Naive thymus-derived CD8-positive, alpha-beta T cell (primary cell): ENCODE measurements at regions of chr11 and their contacts with region 1.

Region 1: DNA sequence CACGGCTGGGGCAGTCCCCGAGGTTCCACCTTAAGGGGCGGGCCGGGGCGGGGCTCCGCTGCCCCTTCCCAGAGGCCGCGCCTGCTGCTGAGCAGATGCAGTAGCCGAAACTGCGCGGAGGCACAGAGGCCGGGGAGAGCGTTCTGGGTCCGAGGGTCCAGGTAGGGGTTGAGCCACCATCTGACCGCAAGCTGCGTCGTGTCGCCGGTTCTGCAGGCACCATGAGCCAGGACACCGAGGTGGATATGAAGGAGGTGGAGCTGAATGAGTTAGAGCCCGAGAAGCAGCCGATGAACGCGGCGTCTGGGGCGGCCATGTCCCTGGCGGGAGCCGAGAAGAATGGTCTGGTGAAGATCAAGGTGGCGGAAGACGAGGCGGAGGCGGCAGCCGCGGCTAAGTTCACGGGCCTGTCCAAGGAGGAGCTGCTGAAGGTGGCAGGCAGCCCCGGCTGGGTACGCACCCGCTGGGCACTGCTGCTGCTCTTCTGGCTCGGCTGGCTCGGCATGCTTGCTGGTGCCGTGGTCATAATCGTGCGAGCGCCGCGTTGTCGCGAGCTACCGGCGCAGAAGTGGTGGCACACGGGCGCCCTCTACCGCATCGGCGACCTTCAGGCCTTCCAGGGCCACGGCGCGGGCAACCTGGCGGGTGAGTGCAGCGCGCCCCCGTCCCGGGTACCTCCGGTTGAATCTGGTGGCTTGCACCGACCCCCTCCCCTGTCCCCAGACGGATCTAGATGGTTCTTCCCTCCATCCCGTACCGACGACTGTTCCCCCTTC is at the start of gene SLC3A2:
- DNase-seq: peak; percentile 77 to 90 (median 84)
- ATAC-seq: peak; percentile 81 to 82
- H3K4me3 Mint-ChIP-seq: peak within 1 kb of the TSS; percentile 96 to 100 (median 99)
- H3K27ac Mint-ChIP-seq: peak within 1 kb of the TSS; percentile 97 to 100 (median 100)
- H3K4me1 Mint-ChIP-seq: peaks cover 33 to 53% (median 51%) of the 10 kb centered on the region in 4 donors
- H3K27me3 Mint-ChIP-seq: no peaks in the 10 kb centered on the region
- polyA plus RNA-seq, gene SLC3A2: 119 to 164 (median 125) TPM

Region 2: GRCh38 chr11:62400760-62401159 is 480.2 kb before region 1 on chr11:
- POLR2A ChIA-PET with region 1: interaction called, 12 read pairs
- DNase-seq: no peak
- ATAC-seq: no peak
- H3K4me3 Mint-ChIP-seq: peak overlapping the region in 9 of 10 donors; percentile 19 to 96 (median 83)
- H3K27ac Mint-ChIP-seq: peak overlapping the region in 9 of 10 donors; percentile 59 to 98 (median 91)
- H3K4me1 Mint-ChIP-seq: peaks cover 35 to 67% (median 59%) of the 10 kb centered on the region in 4 donors
- H3K27me3 Mint-ChIP-seq: no peaks in the 10 kb centered on the region

Region 3: GRCh38 chr11:62753736-62754603 is 127.0 kb before region 1 on chr11 and contains the start of gene ZBTB3:
- POLR2A ChIA-PET with region 1: interaction called, 23 read pairs
- DNase-seq: peak; percentile 93 to 100 (median 96)
- ATAC-seq: peak; percentile 95 to 96
- H3K4me3 Mint-ChIP-seq: peak within 1 kb of the TSS; percentile 91 to 100 (median 97)
- H3K27ac Mint-ChIP-seq: peak within 1 kb of the TSS; percentile 88 to 100 (median 99)
- H3K4me1 Mint-ChIP-seq: peaks cover 8 to 43% (median 28%) of the 10 kb centered on the region in 4 donors
- H3K27me3 Mint-ChIP-seq: no peaks in the 10 kb centered on the region
- polyA plus RNA-seq, gene ZBTB3: 2.1 to 6.7 (median 3.6) TPM

Region 4: GRCh38 chr11:62787005-62787759 is 93.8 kb before region 1 on chr11 and contains the start of gene TMEM179B:
- POLR2A ChIA-PET with region 1: interaction called, 87 read pairs
- DNase-seq: peak; percentile 90 to 99 (median 97)
- ATAC-seq: peak; percentile 69 to 73
- H3K4me3 Mint-ChIP-seq: peak within 1 kb of the TSS; percentile 90 to 96 (median 96)
- H3K27ac Mint-ChIP-seq: peak within 1 kb of the TSS; percentile 92 to 98 (median 96)
- H3K4me1 Mint-ChIP-seq: peaks cover 14 to 53% (median 46%) of the 10 kb centered on the region in 4 donors
- H3K27me3 Mint-ChIP-seq: no peaks in the 10 kb centered on the region
- polyA plus RNA-seq, gene TMEM179B: 109 to 126 (median 122) TPM

Region 5: DNA sequence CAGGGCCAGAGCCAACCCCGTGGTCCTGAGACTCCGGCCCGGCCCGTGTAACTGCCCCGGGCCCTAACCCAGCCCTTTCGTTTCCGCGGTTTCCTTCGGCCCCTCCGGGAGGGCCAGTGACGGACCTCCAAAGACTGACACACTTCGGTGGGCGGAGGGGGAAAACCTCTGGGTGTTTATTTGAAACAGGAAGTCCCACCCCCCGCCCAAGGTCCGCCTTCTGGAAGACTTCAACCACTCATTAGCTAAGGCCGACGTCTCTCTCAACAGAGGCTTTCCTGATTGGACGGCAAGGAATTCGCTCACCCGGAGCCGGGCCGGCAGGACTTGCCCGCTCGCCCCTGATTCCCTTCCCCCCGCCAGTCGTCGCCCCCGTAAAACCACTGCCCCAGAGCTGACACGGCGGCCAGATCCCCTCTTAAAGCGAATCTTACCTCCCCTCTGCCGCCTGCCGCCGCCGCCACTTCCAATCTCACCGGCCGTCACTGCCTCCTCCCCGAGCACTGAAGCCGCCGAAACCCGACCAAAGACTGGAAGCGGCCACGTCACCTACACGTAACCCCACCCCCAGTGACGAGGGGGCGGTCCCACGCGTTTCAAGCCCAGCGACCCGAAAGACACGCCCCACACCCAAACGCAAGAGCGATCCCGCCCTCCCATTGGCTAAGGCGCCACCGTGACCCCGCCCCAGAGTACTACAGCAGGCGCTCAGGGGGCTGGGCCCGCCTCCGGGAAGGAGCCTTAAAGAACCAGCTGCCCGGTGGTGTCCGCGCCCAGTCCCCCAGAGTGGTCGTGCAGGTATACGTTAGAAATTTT is 49.3 kb before region 1 on chr11 and contains the start of gene STX5:
- POLR2A ChIA-PET with region 1: interaction called, 18 read pairs
- DNase-seq: peak; percentile 99 to 100 (median 100)
- ATAC-seq: peak; percentile 89 to 90
- H3K4me3 Mint-ChIP-seq: peak within 1 kb of the TSS; percentile 93 to 99 (median 98)
- H3K27ac Mint-ChIP-seq: peak within 1 kb of the TSS; percentile 91 to 100 (median 100)
- H3K4me1 Mint-ChIP-seq: peaks cover 25 to 56% (median 48%) of the 10 kb centered on the region in 4 donors
- H3K27me3 Mint-ChIP-seq: no peaks in the 10 kb centered on the region
- polyA plus RNA-seq, gene STX5: 25.4 to 30.4 (median 26.2) TPM

Region 6: DNA sequence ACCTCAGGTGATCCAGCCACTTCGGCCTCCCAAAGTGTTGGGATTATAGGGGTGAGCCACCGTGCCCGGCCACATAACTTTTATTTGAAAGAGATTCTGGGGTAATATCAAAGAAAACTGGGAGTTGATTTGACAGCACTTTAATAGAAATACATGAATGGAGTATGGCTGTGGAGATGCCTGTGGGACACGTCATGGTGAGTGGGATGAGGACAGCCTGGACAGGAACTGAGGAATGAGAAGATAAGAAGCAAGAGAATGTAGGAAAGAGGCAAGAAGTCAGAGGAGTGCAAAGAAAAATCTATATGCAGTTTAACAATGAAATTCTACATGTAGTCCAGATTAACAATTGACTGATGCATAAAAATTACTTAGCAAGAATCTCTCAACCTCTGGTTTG is 72.8 kb after region 1 on chr11:
- POLR2A ChIA-PET with region 1: no interaction called
- DNase-seq: no peak
- ATAC-seq: no peak
- H3K4me3 Mint-ChIP-seq: no peak overlapping the region
- H3K27ac Mint-ChIP-seq: no peak overlapping the region
- H3K4me1 Mint-ChIP-seq: peaks cover 0 to 4% (median 0%) of the 10 kb centered on the region in 4 donors
- H3K27me3 Mint-ChIP-seq: peaks cover 6 to 22% (median 11%) of the 10 kb centered on the region in 5 donors